Prostate gland (tissue), 2 donors: ENCODE measurements at regions of chr6 and their contacts with region 1.

Region 1: DNA sequence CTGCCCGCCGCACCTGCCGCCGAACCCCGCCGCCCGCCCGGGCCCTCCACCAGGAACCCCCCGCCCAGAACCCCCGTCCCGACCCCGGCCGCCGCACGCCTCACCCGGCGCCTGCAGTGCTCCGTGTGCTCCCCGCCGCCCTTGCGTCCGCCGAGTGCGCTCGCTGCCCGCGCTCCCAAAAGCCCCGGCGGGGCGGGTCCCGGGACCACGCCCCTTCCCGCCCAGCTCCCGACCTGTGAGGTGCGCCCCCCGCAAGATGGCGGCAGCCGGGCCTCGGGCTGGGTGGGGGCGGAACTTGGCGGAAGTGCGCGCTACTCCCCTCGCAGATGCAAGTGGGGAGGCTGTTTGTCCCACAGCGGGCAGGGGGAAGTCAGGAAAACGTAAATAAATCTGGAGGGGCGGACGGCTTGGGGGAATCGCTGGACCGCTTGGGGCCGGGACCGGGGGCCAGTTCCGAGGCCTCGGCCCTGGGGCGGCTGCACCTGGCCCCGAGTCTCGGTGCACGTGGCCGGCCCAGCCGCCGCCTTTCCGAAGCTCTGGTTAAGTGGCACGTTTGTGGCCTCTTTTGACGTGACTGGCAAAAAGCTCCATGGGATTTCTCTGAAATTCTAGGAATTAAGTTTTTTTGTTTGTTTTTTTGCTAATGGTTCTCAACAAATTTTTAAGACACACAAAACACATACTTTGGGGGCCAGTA is at the start of gene EZR:
- DNase-seq: peak; percentile 79
- H3K4me3 ChIP-seq: peak within 1 kb of the TSS; percentile 94 to 97
- H3K27ac ChIP-seq: peak within 1 kb of the TSS; percentile 99 to 100
- H3K4me1 ChIP-seq: peaks cover 8% of the 10 kb centered on the region
- H3K27me3 ChIP-seq: no peaks in the 10 kb centered on the region
- CTCF ChIP-seq: peak in 3 of 4 experiments; percentile 14 to 45 (median 28)
- POLR2A ChIP-seq: peak; percentile 81
- total RNA-seq, gene EZR: 118 to 222 TPM

Region 2: DNA sequence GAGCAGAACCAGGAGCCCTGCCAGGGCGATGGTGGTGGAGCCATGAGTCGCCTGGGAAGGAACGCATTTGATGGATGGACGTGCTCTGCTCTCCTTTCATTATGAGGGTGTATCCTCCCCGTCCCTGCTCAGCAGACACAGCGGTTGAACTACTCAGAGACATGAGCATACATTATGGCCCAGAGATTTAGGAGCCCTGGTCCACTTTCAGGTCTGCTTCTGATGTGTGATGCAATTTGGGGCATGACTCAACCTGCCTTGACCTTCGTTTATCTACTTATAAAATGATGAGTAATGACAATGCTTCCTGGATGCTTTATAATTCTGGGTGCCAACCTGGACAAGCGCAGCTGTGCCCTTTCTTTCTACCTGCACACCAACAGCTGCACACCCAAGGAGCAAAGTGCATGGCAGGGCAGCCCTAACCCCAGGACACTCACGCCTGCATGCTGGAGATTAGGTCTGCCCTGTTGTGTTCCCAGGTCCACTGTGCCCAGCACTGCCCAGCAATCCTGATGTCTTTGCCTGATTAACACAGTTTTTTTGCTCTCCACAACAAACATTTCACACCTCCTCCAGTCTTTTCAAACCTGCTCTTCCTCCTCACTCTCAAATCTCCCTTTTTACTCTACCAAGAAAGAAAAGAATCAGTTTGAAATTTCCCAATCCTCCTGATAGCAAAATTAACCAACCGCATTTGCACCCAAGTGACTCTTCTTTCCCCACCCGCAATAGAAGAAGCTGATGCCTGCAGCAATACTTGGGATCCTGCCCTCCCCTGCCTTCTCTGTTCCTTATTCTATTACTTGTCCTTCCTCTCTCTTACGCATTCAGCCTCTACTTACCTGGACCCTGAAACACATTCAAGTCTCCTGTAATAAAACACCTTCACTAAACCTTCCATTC is 81.4 kb before region 1 on chr6:
- intact Hi-C with region 1: no loop called
- DNase-seq: peak; percentile 64
- H3K4me3 ChIP-seq: no peak overlapping the region
- H3K27ac ChIP-seq: no peak overlapping the region
- H3K4me1 ChIP-seq: no peaks in the 10 kb centered on the region
- H3K27me3 ChIP-seq: no peaks in the 10 kb centered on the region
- CTCF ChIP-seq: no peak
- POLR2A ChIP-seq: no peak

Region 3: GRCh38 chr6:158769771-158770432 is 49.5 kb before region 1 on chr6:
- intact Hi-C with region 1: loop called (anchors 5 kb)
- DNase-seq: no peak
- H3K4me3 ChIP-seq: no peak overlapping the region
- H3K27ac ChIP-seq: no peak overlapping the region
- H3K4me1 ChIP-seq: peaks cover 9% of the 10 kb centered on the region
- H3K27me3 ChIP-seq: no peaks in the 10 kb centered on the region
- CTCF ChIP-seq: no peak
- POLR2A ChIP-seq: no peak

Region 4: DNA sequence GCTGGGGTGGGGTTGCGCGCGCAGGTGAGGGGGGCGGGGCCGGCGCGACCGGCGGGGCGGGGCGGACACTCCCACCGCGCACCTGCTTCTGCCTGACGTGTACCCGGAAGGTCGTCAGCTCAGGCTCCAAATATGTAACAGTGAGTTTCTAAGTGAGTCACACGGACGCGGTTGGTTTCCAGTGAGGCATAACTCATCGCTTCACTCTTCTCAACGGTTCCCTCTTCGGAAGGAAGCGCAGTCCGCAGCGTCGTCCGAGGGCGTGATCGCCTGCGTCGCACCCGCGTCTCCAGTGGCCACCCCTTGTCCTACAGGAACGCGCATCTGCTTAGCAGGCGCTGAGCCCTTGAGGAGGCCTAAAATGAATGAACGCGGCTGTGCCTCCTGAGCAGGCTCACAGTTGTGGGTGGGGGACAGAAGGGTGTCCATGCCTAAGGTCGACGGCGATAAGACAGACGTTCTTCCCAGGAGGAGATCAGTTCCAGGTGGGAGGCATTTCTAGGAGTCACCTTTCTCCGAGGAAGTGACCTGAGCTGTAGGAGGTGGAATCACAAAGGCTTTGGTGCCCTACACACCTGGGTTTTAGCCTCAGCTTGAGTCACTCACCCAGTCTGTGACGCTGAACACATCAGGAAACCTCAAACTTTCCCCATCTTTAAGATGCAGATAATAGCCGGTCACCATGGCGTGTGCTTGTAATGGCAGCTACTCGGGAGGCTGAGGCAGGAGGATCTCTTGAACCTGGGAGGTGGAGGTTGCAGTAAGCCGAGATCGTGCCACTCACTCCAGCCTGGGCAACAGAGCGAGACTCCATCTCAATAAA is 50.7 kb after region 1 on chr6:
- intact Hi-C with region 1: loop called (anchors 2 kb)
- DNase-seq: peak; percentile 92
- H3K4me3 ChIP-seq: peak overlapping the region; percentile 32 to 47
- H3K27ac ChIP-seq: peak overlapping the region; percentile 88 to 95
- H3K4me1 ChIP-seq: no peaks in the 10 kb centered on the region
- H3K27me3 ChIP-seq: no peaks in the 10 kb centered on the region
- CTCF ChIP-seq: peak in 2 of 4 experiments; percentile 38 to 43
- POLR2A ChIP-seq: peak; percentile 77

Region 5: GRCh38 chr6:158894193-158894592 is 74.8 kb after region 1 on chr6:
- intact Hi-C with region 1: no loop called
- DNase-seq: no peak
- H3K4me3 ChIP-seq: no peak overlapping the region
- H3K27ac ChIP-seq: no peak overlapping the region
- H3K4me1 ChIP-seq: no peaks in the 10 kb centered on the region
- H3K27me3 ChIP-seq: no peaks in the 10 kb centered on the region
- CTCF ChIP-seq: no peak
- POLR2A ChIP-seq: no peak